WTC11 (cell line): ENCODE measurements at regions of chr16 and their contacts with region 1.

Region 1: GRCh38 chr16:11328172-11329070 is 16.8 kb upstream of the RMI2 start:
- DNase-seq: peak; percentile 79
- ATAC-seq: peak; percentile 89
- H3K4me3 Mint-ChIP-seq: peak overlapping the region; percentile 58
- H3K27ac Mint-ChIP-seq: peak overlapping the region; percentile 100
- H3K4me1 Mint-ChIP-seq: peaks cover 62% of the 10 kb centered on the region
- H3K27me3 Mint-ChIP-seq: no peaks in the 10 kb centered on the region
- CTCF ChIP-seq: no peak

Region 2: GRCh38 chr16:11248133-11248532 is 80.3 kb before region 1 on chr16:
- CTCF ChIA-PET with region 1: no interaction called
- POLR2A ChIA-PET with region 1: no interaction called
- DNase-seq: no peak
- ATAC-seq: no peak
- H3K4me3 Mint-ChIP-seq: no peak overlapping the region
- H3K27ac Mint-ChIP-seq: no peak overlapping the region
- H3K4me1 Mint-ChIP-seq: peaks cover 22% of the 10 kb centered on the region
- H3K27me3 Mint-ChIP-seq: no peaks in the 10 kb centered on the region
- CTCF ChIP-seq: no peak

Region 3: GRCh38 chr16:11312718-11313492 is 15.5 kb before region 1 on chr16:
- CTCF ChIA-PET with region 1: interaction called, 11 read pairs
- POLR2A ChIA-PET with region 1: interaction called, 24 read pairs
- DNase-seq: peak; percentile 53
- ATAC-seq: peak; percentile 3; the same call in 1 of the 2 replicates
- H3K4me3 Mint-ChIP-seq: peak overlapping the region; percentile 50
- H3K27ac Mint-ChIP-seq: peak overlapping the region; percentile 98
- H3K4me1 Mint-ChIP-seq: peaks cover 71% of the 10 kb centered on the region
- H3K27me3 Mint-ChIP-seq: no peaks in the 10 kb centered on the region
- CTCF ChIP-seq: no peak